Calu3 (cell line): ENCODE measurements at regions of chr1 and their contacts with region 1.

Region 1: GRCh38 chr1:47147047-47147785 is 10.0 kb downstream of the CYP4A22 start:
- DNase-seq: no peak
- H3K4me3 Mint-ChIP-seq: no peak overlapping the region
- H3K27ac Mint-ChIP-seq: no peak overlapping the region
- H3K4me1 Mint-ChIP-seq: no peaks in the 10 kb centered on the region
- H3K27me3 Mint-ChIP-seq: peaks cover 56% of the 10 kb centered on the region
- CTCF ChIP-seq: no peak

Region 2: DNA sequence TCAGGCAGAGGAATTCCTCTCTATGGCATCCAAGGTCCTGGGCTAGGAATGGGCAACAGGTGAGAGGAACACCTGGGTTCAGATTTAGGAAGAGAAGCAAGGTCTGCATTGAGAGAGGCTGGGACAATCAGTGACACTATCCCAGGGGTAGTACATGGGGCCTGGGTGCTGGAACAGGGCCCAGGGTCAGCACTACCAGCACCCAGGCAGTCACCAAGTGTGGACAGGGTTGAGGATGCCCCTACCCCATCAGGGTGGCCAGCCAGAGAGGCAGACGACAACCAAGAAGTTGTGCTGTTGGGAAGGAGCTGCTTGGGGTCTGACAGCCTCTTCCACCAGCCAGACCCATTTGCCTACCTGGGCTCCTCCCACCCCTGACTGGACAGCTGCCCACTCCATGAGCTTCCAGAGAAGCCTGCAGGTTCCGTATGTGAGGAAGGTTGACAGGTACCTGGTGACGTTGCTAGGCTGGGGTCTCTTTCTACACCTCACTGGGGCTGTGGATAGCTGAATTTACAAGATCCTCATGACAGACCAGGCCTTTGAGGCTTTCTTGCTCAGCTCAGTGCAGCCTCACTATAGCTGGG is 219.9 kb before region 1 on chr1:
- CTCF ChIA-PET with region 1: interaction called, 4 read pairs
- intact Hi-C with region 1: loop called (anchors 5 kb)
- DNase-seq: no peak
- H3K4me3 Mint-ChIP-seq: no peak overlapping the region
- H3K27ac Mint-ChIP-seq: no peak overlapping the region
- H3K4me1 Mint-ChIP-seq: no peaks in the 10 kb centered on the region
- H3K27me3 Mint-ChIP-seq: peaks cover 95% of the 10 kb centered on the region
- CTCF ChIP-seq: no peak

Region 3: GRCh38 chr1:47201179-47201578 is 54.0 kb after region 1 on chr1:
- CTCF ChIA-PET with region 1: no interaction called
- intact Hi-C with region 1: no loop called
- DNase-seq: no peak
- H3K4me3 Mint-ChIP-seq: no peak overlapping the region
- H3K27ac Mint-ChIP-seq: no peak overlapping the region
- H3K4me1 Mint-ChIP-seq: no peaks in the 10 kb centered on the region
- H3K27me3 Mint-ChIP-seq: peaks cover 53% of the 10 kb centered on the region
- CTCF ChIP-seq: no peak